PC-9 (cell line): ENCODE measurements at regions of chr6 and their contacts with region 1.

Region 1: DNA sequence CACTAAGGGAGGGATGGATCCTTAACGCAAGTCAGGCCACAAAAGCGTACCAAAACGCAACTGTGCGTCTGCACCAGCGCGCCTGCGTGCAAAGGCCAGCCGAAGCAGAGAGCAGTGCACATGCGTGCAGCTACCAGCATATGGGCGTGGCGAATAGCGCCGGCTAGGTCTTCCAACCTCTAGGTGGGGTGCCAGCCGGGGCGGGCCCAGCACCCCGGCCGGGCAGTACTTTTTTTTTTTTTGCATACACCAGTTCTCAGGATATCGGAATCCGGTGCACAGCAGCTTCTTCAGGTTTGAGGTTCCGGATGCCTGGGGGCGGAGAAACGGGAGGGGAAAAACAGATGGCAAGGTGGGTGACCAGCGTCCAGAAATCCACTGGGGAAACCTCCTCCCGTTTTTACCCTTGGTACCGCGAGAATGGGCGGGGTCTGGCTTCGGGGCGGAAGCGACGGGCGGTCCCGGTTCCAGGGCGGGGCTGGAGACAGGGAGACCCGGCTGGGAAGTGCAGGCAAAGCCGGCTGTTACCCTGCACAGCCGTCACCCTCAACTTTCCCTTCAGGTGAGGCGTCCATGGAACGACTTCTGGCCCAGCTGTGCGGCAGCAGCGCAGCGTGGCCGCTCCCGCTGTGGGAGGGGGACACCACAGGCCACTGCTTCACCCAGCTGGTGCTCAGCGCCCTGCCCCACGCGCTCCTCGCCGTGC is at the start of gene ABCC10:
- DNase-seq: peak; percentile 91 to 96
- H3K4me3 ChIP-seq: peak within 1 kb of the TSS; percentile 87
- H3K27ac ChIP-seq: peak within 1 kb of the TSS; percentile 64
- H3K4me1 ChIP-seq: peaks cover 19% of the 10 kb centered on the region
- H3K27me3 ChIP-seq: no peaks in the 10 kb centered on the region
- CTCF ChIP-seq: peak; percentile 47; the same call in 1 of the 2 replicates
- total RNA-seq, gene ABCC10: 28.4 and 28.7 TPM in 2 replicates

Region 2: DNA sequence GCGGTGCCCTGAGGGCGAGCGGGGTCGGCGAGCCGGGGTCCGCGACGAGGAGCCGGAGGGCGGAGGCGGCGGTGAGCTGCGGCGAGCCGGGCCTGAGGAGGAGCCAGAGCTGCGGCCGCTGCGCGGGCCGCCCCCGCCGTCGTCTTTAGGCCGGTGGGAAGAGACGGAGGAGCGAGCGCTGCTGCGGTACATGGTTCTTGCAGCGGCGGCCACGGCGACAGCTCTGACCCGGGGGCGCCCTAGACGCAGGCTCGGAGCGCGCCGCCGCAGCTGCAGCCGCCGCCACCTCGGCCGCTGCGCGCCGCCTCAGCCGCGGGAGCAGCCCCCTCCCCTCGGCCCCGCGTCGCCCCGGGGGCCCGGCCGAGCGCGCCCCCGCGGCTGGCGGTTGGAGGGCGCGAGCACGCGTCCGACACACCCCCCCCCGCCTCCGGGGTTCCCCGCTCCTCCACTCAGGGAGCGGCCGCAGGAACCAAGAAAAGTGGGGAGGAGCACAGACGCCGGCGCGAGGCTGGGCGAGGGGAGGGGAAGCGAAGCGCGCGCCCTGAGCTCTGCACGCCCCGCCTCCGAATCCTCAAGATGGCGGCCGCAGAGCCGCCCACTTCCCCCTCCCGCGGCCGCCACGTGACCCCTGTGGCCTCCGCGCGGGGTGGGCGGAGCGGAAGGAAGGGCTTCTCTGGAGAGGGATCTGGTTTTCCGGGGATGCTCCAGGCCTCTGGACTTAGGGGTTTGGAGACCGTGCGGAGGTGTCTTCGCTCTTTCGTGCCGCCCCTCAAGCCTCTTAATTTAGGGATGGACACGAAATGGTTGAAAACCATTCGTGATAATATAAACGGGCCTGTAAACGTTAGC is 58.2 kb before region 1 on chr6 and contains the start of gene ZNF318:
- CTCF ChIA-PET with region 1: no interaction called
- POLR2A ChIA-PET with region 1: no interaction called
- intact Hi-C with region 1: loop called (anchors 5 kb)
- DNase-seq: peak; percentile 86 to 96
- H3K4me3 ChIP-seq: peak within 1 kb of the TSS; percentile 71
- H3K27ac ChIP-seq: peak within 1 kb of the TSS; percentile 85
- H3K4me1 ChIP-seq: peaks cover 34% of the 10 kb centered on the region
- H3K27me3 ChIP-seq: no peaks in the 10 kb centered on the region
- CTCF ChIP-seq: no peak
- total RNA-seq, gene ZNF318: 14.9 and 17.1 TPM in 2 replicates

Region 3: GRCh38 chr6:43774776-43775534 is 347.4 kb after region 1 on chr6:
- CTCF ChIA-PET with region 1: no interaction called
- POLR2A ChIA-PET with region 1: no interaction called
- intact Hi-C with region 1: no loop called
- DNase-seq: peak; percentile 65 to 71
- H3K4me3 ChIP-seq: peak overlapping the region; percentile 90
- H3K27ac ChIP-seq: peak overlapping the region; percentile 94; the same call in 1 of the 2 replicates
- H3K4me1 ChIP-seq: peaks cover 35% of the 10 kb centered on the region
- H3K27me3 ChIP-seq: no peaks in the 10 kb centered on the region
- CTCF ChIP-seq: peak; percentile 85